MCF 10A (cell line): ENCODE measurements at regions of chr2 and their contacts with region 1.

Region 1: DNA sequence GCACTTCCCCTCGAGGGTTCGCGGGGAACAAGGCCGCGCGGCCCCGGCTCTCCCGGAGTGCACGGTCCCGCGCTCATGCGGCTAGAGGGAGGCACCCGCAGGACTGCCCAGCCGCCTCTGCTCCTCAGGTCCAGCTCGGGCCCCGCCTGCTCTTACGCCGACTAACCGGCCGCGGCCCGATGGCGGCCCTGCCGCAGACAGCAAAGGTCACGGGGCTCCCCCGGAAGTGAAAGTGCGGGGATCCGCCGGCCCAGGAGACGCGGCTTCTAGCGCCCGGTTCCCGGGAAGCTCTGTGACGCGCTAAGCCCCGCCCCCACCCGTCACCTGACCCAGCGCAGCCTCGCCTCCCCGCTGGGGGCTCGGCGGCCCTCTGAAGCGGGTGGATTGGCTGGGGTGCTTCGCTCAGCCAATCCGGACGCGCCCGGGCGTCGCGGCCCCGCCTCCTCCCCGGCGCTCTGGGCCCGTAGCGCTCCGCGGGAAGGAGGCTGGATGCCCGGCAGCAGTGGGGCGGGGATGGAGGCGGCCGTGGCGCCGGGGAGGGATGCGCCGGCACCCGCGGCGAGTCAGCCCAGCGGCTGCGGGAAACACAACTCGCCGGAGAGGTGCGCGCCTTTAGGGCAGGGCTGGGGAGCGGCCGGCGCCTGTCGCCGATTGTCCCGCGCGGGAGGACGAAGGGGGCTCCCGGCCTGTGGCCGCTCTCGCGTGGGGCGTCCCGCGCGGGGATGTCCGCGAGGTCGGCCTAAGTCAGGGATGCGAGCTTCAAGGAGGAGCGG is at the start of gene SCLY:
- DNase-seq: peak; percentile 97
- H3K4me3 Mint-ChIP-seq: peak within 1 kb of the TSS; percentile 82
- H3K27ac Mint-ChIP-seq: peak within 1 kb of the TSS; percentile 91
- H3K4me1 Mint-ChIP-seq: peaks cover 15% of the 10 kb centered on the region
- H3K27me3 Mint-ChIP-seq: no peaks in the 10 kb centered on the region
- CTCF ChIP-seq: no peak
- total RNA-seq, gene SCLY: 40.1 and 40.4 TPM in 2 replicates

Region 2: DNA sequence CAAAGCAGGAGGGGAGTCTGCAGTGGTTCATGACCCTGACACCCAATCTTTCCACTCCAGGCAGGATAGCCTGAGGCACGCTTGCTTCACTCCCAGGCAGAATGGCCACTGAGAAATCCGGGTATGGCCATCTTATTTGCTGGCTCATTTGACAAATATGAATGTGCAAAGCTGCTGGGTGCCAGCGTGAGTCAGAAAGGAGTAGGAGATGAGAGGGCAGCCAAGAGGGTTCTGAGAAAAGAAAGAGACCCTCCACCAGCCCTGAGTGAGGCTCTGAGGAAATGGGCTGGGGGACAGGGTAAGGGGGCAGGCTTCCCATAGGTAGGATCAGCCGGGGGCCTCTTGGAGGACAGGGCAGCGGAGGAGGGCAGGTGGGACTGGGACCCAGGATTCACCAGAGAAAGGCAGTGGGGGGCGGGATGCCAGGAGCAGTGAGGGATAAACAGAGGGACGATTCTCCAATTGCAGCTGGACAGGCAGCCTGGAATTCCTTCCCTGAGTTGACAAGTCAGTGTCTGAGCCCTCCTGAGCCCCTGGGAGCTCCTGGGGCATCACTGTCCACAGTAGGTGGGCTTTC is 186.1 kb before region 1 on chr2:
- CTCF ChIA-PET with region 1: no interaction called
- POLR2A ChIA-PET with region 1: interaction called, 13 read pairs
- intact Hi-C with region 1: no loop called
- DNase-seq: peak; percentile 93
- H3K4me3 Mint-ChIP-seq: peak overlapping the region; percentile 4
- H3K27ac Mint-ChIP-seq: peak overlapping the region; percentile 86
- H3K4me1 Mint-ChIP-seq: peaks cover 44% of the 10 kb centered on the region
- H3K27me3 Mint-ChIP-seq: no peaks in the 10 kb centered on the region
- CTCF ChIP-seq: no peak

Region 3: GRCh38 chr2:238030422-238031154 is 30.1 kb before region 1 on chr2:
- CTCF ChIA-PET with region 1: no interaction called
- POLR2A ChIA-PET with region 1: interaction called, 34 read pairs
- intact Hi-C with region 1: no loop called
- DNase-seq: no peak
- H3K4me3 Mint-ChIP-seq: no peak overlapping the region
- H3K27ac Mint-ChIP-seq: peak overlapping the region; percentile 74
- H3K4me1 Mint-ChIP-seq: peaks cover 9% of the 10 kb centered on the region
- H3K27me3 Mint-ChIP-seq: no peaks in the 10 kb centered on the region
- CTCF ChIP-seq: no peak

Region 4: GRCh38 chr2:238139196-238140039 is 78.7 kb after region 1 on chr2:
- CTCF ChIA-PET with region 1: no interaction called
- POLR2A ChIA-PET with region 1: interaction called, 5 read pairs
- intact Hi-C with region 1: loop called (anchors 5 kb)
- DNase-seq: no peak
- H3K4me3 Mint-ChIP-seq: no peak overlapping the region
- H3K27ac Mint-ChIP-seq: no peak overlapping the region
- H3K4me1 Mint-ChIP-seq: peaks cover 26% of the 10 kb centered on the region
- H3K27me3 Mint-ChIP-seq: no peaks in the 10 kb centered on the region
- CTCF ChIP-seq: peak; percentile 43

Region 5: DNA sequence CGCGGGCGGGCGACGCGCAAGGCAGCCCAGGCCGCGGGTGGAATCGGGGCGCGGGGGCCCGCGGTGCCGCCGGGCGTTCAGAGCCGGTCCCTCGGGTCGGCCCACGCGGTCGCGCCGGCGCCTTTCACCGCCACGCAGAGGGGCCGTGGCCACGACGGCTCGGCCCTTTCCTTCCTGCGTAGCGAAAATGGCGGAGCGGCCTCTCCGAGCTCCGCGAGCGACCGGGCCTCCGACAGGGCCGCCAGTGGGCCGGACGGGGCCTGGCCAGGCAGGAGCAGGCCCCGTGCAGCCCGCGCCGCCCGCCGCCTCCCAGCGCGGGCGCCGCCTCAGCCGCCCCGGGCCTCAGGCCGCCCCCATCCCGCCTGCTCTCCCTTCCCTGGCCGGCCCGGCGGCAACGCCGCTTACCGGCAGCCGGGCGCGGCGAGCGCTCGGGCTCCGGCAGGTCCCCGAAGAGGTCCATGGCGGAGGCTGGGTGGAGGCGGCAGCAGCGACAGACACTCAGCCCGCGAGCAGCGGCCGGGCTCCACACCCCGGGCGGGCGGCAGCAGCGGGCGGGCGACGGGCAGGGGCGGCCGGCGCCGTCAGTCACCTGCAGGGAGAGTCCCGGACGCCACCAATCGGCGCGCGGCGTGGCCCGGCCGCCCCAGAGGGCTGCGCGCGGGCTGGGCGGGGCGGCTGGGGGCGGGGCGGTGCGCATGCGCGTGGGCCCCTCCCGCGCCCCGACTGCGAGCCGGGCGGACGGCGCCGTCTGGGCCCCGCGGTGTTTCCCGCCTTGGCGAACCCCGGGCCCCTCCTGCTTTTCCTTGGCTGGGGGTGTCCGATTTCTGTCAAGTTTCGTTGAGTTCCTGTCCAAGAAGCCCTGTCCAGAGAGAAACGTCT is 142.6 kb after region 1 on chr2 and contains the start of gene ILKAP:
- CTCF ChIA-PET with region 1: no interaction called
- POLR2A ChIA-PET with region 1: interaction called, 22 read pairs
- intact Hi-C with region 1: no loop called
- DNase-seq: peak; percentile 82
- H3K4me3 Mint-ChIP-seq: peak within 1 kb of the TSS; percentile 84
- H3K27ac Mint-ChIP-seq: peak within 1 kb of the TSS; percentile 89
- H3K4me1 Mint-ChIP-seq: peaks cover 29% of the 10 kb centered on the region
- H3K27me3 Mint-ChIP-seq: no peaks in the 10 kb centered on the region
- CTCF ChIP-seq: no peak
- total RNA-seq, gene ILKAP: 57.2 and 59.6 TPM in 2 replicates

Region 6: DNA sequence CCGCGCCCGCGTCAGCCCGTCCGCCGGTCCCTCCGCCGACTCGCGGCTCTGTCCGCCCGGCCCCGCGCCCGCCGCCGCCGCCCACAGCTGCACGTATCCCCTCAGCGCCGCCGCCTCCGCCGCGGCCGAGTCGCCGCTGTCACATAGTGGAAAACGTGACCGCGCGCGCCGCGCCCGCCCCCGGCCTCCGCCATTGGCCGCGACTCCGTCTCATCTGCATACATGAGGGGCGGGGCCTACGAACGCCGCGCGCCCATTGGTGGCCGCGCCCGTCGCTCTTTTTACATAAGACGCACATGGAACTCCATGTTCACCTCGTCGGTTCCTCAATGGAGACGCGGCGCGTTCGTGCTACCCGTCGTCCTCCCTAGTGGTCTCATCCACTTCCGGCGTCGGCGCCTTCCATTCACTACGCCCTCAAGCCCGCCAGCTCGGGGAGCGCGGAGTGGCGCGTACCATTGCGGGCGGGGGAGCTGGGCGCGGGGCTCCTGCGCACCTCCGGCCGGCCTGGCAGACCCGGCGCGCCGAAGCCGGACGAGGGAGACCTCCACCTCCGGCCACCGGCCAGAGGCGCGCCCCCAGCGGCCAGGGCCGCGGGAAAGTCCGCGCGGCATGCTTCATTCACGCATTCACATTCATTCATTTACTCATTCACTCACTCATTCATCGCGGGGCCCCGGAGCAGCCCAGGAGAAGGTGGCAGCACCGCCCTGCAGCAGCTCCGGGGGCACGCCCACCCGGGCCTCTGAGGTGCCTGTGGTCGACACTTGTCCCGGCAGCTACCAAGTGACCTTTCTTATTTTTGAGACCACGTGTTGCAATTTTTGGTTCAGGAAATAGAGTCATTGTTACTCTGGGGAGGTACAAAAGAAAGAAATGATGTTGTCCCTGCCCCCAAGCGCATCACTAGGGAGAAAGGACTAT is 228.2 kb after region 1 on chr2:
- CTCF ChIA-PET with region 1: no interaction called
- POLR2A ChIA-PET with region 1: interaction called, 14 read pairs
- intact Hi-C with region 1: no loop called
- DNase-seq: peak; percentile 98
- H3K4me3 Mint-ChIP-seq: peak overlapping the region; percentile 74
- H3K27ac Mint-ChIP-seq: peak overlapping the region; percentile 99
- H3K4me1 Mint-ChIP-seq: peaks cover 43% of the 10 kb centered on the region
- H3K27me3 Mint-ChIP-seq: no peaks in the 10 kb centered on the region
- CTCF ChIP-seq: peak; percentile 19